Activated CD4-positive, alpha-beta T cell treated with anti-CD3 and anti-CD28 coated beads, Interleukin-2, amount 10 ng/mL, durations not matched to agents 7 days and 5 days (primary cell): ENCODE measurements at regions of chr11 and their contacts with region 1.

Region 1: DNA sequence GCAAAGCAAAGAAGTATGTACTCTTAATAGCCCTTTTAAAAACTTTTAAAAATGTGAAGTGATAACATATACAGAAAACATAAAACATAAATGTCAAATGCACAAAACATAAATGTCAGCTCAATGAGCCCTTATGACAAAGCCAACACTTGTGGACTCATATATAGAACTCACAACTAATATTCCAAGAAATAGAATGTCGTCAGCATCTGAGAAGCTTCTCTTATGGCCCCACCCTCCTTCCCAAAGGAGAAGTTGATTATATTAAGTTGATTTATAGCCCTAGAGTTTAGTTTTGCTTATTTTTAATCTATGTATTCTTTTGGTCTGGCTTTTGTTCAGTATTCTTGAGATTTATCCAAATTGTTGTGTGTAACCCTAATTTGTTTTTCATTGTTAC is 13.8 kb downstream of the NEU3 start:
- DNase-seq: no peak
- H3K4me3 Mint-ChIP-seq: no peak overlapping the region
- H3K27ac Mint-ChIP-seq: no peak overlapping the region
- H3K4me1 Mint-ChIP-seq: peaks cover 6% of the 10 kb centered on the region
- H3K27me3 Mint-ChIP-seq: no peaks in the 10 kb centered on the region

Region 2: DNA sequence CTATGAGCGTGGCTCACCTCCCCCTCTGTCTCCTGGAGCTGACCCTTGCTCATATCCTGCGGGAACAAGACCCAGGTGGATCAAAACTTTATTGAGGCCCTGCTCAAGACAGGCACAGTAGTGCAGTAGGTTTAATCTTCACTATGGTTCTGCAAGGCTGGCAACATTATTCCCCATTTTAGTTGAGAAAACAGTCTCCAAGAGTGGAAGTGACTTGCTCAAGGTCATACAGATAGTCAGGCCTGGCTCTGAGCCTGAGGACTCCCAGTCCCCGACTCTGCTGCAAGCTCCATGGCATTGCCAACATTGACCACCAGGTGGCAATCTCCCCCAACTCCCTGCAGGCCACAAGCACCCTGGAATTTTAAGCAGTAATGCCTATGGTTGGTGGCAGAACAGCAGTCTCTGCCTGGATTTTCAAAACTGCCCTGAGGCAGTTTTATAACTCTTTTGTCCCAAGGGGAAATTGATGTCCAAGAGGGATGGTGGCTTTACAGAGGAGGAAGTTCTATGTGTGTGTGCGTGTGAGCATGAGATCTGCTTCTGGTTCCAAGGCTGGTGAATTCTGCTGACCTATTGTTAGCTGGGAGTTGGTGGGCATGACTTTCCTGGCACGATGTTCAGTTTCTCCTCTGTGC is 20.4 kb after region 1 on chr11:
- CTCF ChIA-PET with region 1: interaction called, 16 read pairs
- POLR2A ChIA-PET with region 1: no interaction called
- DNase-seq: peak; percentile 75
- H3K4me3 Mint-ChIP-seq: no peak overlapping the region
- H3K27ac Mint-ChIP-seq: no peak overlapping the region
- H3K4me1 Mint-ChIP-seq: no peaks in the 10 kb centered on the region
- H3K27me3 Mint-ChIP-seq: no peaks in the 10 kb centered on the region